Lower lobe of right lung (tissue), 2 donors: ENCODE measurements at regions of chr11 and their contacts with region 1.

Region 1: DNA sequence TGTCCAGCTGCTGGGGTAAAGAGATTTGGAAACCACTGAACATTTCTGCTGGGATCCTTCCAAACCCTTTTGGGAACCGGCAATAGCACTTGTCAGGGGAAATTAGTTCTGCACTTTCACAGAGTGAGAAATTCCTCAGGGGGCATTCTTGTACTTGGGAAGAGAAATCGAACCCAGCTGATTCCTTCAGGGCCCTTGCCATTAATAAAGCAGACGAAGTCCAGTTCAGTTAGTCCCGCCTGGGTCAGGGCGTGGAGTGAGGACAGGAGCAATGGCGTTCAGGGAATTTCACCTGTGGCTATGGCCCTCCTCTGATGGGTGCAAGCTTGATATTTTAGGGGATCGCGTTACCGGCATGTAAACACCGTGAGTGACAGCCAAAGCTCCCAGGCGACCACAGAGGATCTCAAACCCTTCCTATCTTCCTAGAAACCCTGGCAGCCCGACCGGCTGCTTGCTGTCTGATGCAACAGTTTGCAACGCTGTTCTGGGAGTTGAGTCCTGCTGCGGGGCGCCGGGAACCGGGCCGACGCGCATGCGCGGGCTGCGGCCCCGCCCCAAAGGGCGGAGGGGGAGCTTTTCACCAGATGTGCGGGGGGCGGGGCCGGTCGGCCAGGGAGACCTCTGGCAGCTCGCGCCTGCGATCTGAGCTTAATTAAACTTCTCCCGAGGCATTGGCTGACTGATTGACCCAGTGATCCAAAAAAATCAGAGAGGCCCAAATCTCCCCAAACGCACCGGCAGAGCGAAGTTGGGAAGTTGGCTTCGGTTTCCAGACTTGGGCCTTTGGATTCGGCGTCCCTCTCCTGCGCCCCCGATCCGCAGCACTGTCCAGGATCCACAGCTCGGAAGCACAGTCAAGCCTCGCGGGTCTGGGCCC is 34.3 kb upstream of the CREB3L1 start:
- DNase-seq: peak; percentile 94
- ATAC-seq: peak; percentile 92 to 93
- H3K4me3 ChIP-seq: peak overlapping the region; percentile 53
- H3K27ac ChIP-seq: peak overlapping the region; percentile 77
- H3K4me1 ChIP-seq: peaks cover 29% of the 10 kb centered on the region
- H3K27me3 ChIP-seq: no peaks in the 10 kb centered on the region
- CTCF ChIP-seq: no peak

Region 2: GRCh38 chr11:46308631-46309419 is 65.7 kb after region 1 on chr11:
- intact Hi-C with region 1: loop called (anchors 10 kb)
- DNase-seq: peak; percentile 85
- ATAC-seq: peak; percentile 80 to 81
- H3K4me3 ChIP-seq: no peak overlapping the region
- H3K27ac ChIP-seq: no peak overlapping the region
- H3K4me1 ChIP-seq: peaks cover 4% of the 10 kb centered on the region
- H3K27me3 ChIP-seq: no peaks in the 10 kb centered on the region
- CTCF ChIP-seq: peak; percentile 88